Dorsolateral prefrontal cortex (tissue), 120 donors: ENCODE measurements at regions of chr1 and their contacts with region 1.

Region 1: GRCh38 chr1:244451951-244452795 is 464 bp upstream of the ADSS2 start:
- DNase-seq: peak; percentile 94 to 99 (median 98)
- H3K4me3 ChIP-seq: peak overlapping the region; percentile 70 to 99 (median 95)
- H3K27ac ChIP-seq: peak overlapping the region; percentile 80 to 98 (median 94)
- H3K27me3 ChIP-seq: no peaks in the 10 kb centered on the region
- CTCF ChIP-seq: peak; percentile 24 to 77 (median 65)

Region 2: DNA sequence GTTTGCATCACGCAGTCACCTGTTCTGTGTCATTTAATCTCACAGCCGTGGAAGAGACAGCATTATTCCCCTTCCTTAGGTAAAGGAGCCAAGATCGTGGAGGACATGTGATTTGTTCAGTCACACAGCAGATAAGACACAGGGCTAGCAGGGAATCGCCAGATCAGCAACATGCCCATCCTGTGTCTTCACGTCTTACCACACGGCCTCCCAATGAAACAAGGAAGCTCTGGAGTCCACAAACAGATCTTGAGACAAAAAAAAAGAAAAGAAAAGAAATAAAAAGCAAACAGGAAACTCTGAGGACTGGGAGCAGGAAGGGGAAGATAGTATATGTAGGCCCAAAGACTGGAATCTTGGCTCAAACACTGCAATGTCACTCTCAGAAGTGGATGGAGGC is 155.7 kb before region 1 on chr1:
- intact Hi-C with region 1: loop called (anchors 5 to 10 kb)
- DNase-seq: peak in 1 of 10 donors; percentile 42
- H3K4me3 ChIP-seq: no peak overlapping the region
- H3K27ac ChIP-seq: peak overlapping the region in 42 of 59 donors; percentile 4 to 72 (median 34)
- H3K27me3 ChIP-seq: no peaks in the 10 kb centered on the region
- CTCF ChIP-seq: no peak

Region 3: DNA sequence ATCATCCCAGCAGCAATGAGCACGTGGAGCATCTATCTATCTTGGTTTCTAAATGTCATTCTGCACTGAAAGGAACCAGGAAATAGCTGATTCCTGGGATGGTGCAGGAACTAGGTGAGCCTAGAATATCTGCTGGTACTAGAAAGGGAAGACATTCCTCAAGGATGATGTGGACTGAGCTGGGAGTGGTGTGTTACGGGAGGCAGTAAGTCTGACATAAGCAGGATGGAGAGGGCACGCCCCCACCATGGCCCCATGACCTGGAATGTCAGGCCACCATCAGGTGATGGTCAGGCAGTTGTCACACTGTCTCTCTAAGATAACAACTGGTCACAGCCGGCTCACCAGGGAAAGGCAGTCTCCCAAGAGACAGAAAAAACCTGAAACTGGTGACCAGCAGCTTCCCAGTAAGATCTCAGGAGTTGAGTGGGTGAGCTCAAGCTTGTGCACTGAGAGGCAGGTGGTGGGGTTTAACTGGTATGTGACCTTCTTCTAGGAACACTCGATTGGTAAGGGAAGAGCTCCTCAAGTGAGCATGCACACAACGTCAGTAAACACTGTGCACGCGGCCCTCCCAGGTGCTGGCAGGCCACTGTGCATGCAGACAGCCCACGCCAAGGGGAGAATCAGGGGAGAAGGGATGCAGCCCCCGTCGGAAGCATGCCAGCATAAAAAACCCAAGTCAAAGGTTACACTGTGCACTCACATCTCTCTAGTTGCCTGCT is 149.1 kb before region 1 on chr1:
- intact Hi-C with region 1: loop called (anchors 5 to 10 kb)
- DNase-seq: no peak
- H3K4me3 ChIP-seq: no peak overlapping the region
- H3K27ac ChIP-seq: no peak overlapping the region
- H3K27me3 ChIP-seq: no peaks in the 10 kb centered on the region
- CTCF ChIP-seq: no peak

Region 4: GRCh38 chr1:244341455-244342450 is 110.4 kb before region 1 on chr1:
- intact Hi-C with region 1: loop called (anchors 2 to 5 kb)
- DNase-seq: peak in 7 of 10 donors; percentile 41 to 75 (median 54)
- H3K4me3 ChIP-seq: peak overlapping the region in 56 of 59 donors; percentile 0 to 60 (median 33)
- H3K27ac ChIP-seq: peak overlapping the region in 58 of 59 donors; percentile 55 to 98 (median 88)
- H3K27me3 ChIP-seq: no peaks in the 10 kb centered on the region
- CTCF ChIP-seq: peak in 2 of 56 donors; percentile 12 to 19